ENCODE measurements at regions of chr17 and their contacts with region 1.

Region 1: DNA sequence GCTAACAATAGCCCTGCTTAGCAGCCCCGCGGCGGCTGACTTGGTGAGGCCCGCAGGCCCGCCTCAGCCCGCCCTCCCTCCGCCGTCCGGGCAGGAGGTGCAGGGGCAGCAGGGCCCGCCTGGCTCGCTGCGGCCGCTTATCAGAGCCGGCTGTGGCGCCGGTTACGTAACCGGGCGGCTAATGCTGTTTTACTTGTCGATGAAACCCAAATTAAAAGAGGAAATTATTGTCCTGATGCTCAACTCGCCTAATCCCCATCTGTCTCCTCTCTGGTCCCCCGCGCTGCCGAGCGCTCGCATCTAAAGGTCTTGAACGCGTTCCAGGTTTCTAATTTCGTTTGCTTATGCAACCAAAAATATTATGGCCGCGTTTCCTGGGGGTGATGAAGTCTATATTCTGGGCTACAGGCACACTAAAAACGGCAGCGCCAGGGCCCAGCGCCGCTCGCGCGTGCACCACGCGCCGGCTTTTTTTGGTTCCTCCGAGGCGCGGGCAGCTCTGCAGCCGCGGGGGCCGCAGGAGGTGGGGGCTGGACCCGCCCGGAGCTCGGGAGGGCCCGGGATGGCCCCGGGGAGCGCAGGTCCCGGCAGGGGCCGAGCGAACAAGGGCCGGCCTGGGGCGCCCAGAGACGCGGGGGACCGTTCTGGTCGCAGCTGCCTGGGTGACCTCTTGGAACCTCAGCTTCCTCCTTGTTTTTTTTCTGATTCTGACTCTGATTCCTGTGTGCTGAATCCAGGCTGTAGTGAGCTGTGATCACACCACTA is 65.2 kb upstream of the TOB1 start:
- DNase-seq: peak; percentile 91
- ATAC-seq: peak; percentile 95

Region 2: GRCh38 chr17:50865984-50866774 is 65.1 kb before region 1 on chr17 and contains the start of gene TOB1:
- intact Hi-C with region 1: loop called (anchors 5 kb)
- DNase-seq: peak; percentile 98
- ATAC-seq: peak; percentile 88 to 93
- total RNA-seq, gene TOB1: 57.9 to 63.2 TPM